WTC11 (cell line): ENCODE measurements at regions of chr5 and their contacts with region 1.

Region 1: GRCh38 chr5:79774171-79774854 is 84.7 kb downstream of the CMYA5 start:
- DNase-seq: peak; percentile 83
- ATAC-seq: peak; percentile 100
- H3K4me3 Mint-ChIP-seq: no peak overlapping the region; the same call in 1 of the 2 replicates
- H3K27ac Mint-ChIP-seq: peak overlapping the region; percentile 86
- H3K4me1 Mint-ChIP-seq: peaks cover 10% of the 10 kb centered on the region
- H3K27me3 Mint-ChIP-seq: peaks cover 3% of the 10 kb centered on the region; the same call in 1 of the 2 replicates
- CTCF ChIP-seq: peak; percentile 49; the same call in 1 of the 2 replicates

Region 2: DNA sequence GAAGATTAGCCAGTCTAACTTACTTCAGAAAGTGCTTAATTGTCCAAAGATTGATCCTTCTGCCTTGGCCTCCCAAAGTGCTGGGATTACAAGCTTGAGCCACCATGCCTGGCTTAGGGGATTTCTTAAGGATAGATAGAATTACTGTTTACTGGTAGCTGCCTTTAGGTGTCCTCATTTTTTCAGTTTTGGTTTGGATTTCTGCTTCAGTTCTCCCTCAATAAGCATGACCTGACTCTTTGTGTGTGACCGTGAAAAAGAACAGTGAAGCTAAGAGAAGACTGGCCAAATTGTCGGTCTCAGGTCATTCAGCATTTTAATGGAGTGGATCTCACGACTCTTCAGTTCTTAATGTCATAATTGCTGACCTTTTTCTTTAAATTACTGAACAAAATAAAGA is 107.6 kb before region 1 on chr5:
- CTCF ChIA-PET with region 1: interaction called, 11 read pairs
- POLR2A ChIA-PET with region 1: no interaction called
- DNase-seq: no peak
- ATAC-seq: peak; percentile 46; the same call in 1 of the 2 replicates
- H3K4me3 Mint-ChIP-seq: no peak overlapping the region
- H3K27ac Mint-ChIP-seq: peak overlapping the region; percentile 48
- H3K4me1 Mint-ChIP-seq: no peaks in the 10 kb centered on the region
- H3K27me3 Mint-ChIP-seq: no peaks in the 10 kb centered on the region
- CTCF ChIP-seq: no peak

Region 3: GRCh38 chr5:79689541-79690466 is 84.5 kb before region 1 on chr5 and contains the start of gene CMYA5:
- CTCF ChIA-PET with region 1: interaction called, 40 read pairs
- POLR2A ChIA-PET with region 1: no interaction called
- DNase-seq: peak; percentile 70
- ATAC-seq: peak; percentile 76
- H3K4me3 Mint-ChIP-seq: peak within 1 kb of the TSS; percentile 73
- H3K27ac Mint-ChIP-seq: no peak within 1 kb of the TSS
- H3K4me1 Mint-ChIP-seq: peaks cover 31% of the 10 kb centered on the region
- H3K27me3 Mint-ChIP-seq: no peaks in the 10 kb centered on the region; the same call in 1 of the 2 replicates
- CTCF ChIP-seq: no peak
- total RNA-seq, gene CMYA5: 0.98 to 1.2 TPM (median 1.1 TPM) in 3 replicates

Region 4: GRCh38 chr5:79702606-79703382 is 71.5 kb before region 1 on chr5:
- CTCF ChIA-PET with region 1: interaction called, 33 read pairs
- POLR2A ChIA-PET with region 1: no interaction called
- DNase-seq: peak; percentile 45
- ATAC-seq: peak; percentile 52
- H3K4me3 Mint-ChIP-seq: no peak overlapping the region
- H3K27ac Mint-ChIP-seq: no peak overlapping the region
- H3K4me1 Mint-ChIP-seq: peaks cover 4% of the 10 kb centered on the region; the same call in 1 of the 2 replicates
- H3K27me3 Mint-ChIP-seq: no peaks in the 10 kb centered on the region
- CTCF ChIP-seq: no peak

Region 5: GRCh38 chr5:79753092-79753491 is 21.2 kb before region 1 on chr5:
- CTCF ChIA-PET with region 1: interaction called, 11 read pairs
- POLR2A ChIA-PET with region 1: no interaction called
- DNase-seq: no peak
- ATAC-seq: no peak
- H3K4me3 Mint-ChIP-seq: no peak overlapping the region
- H3K27ac Mint-ChIP-seq: no peak overlapping the region
- H3K4me1 Mint-ChIP-seq: peaks cover 21% of the 10 kb centered on the region
- H3K27me3 Mint-ChIP-seq: no peaks in the 10 kb centered on the region
- CTCF ChIP-seq: no peak

Region 6: GRCh38 chr5:79762929-79763328 is 11.4 kb before region 1 on chr5:
- CTCF ChIA-PET with region 1: interaction called, 14 read pairs
- POLR2A ChIA-PET with region 1: no interaction called
- DNase-seq: no peak
- ATAC-seq: no peak
- H3K4me3 Mint-ChIP-seq: no peak overlapping the region
- H3K27ac Mint-ChIP-seq: no peak overlapping the region
- H3K4me1 Mint-ChIP-seq: no peaks in the 10 kb centered on the region
- H3K27me3 Mint-ChIP-seq: peaks cover under 1% of the 10 kb centered on the region
- CTCF ChIP-seq: no peak

Region 7: GRCh38 chr5:79829260-79829659 is 54.9 kb after region 1 on chr5:
- CTCF ChIA-PET with region 1: interaction called, 11 read pairs
- POLR2A ChIA-PET with region 1: no interaction called
- DNase-seq: peak; percentile 68
- ATAC-seq: peak; percentile 100
- H3K4me3 Mint-ChIP-seq: no peak overlapping the region
- H3K27ac Mint-ChIP-seq: no peak overlapping the region
- H3K4me1 Mint-ChIP-seq: no peaks in the 10 kb centered on the region
- H3K27me3 Mint-ChIP-seq: no peaks in the 10 kb centered on the region
- CTCF ChIP-seq: peak; percentile 53